Activated naive CD4-positive, alpha-beta T cell treated with anti-CD3 and anti-CD28 coated beads, Interleukin-2, amount 10 ng/mL, durations not matched to agents 7 days and 5 days (primary cell): ENCODE measurements at regions of chr19 and their contacts with region 1.

Region 1: GRCh38 chr19:19145684-19146608 is 7.7 kb upstream of the TMEM161A start:
- DNase-seq: peak; percentile 90
- H3K4me3 Mint-ChIP-seq: no peak overlapping the region
- H3K27ac Mint-ChIP-seq: no peak overlapping the region
- H3K4me1 Mint-ChIP-seq: no peaks in the 10 kb centered on the region
- H3K27me3 Mint-ChIP-seq: peaks cover 3% of the 10 kb centered on the region

Region 2: GRCh38 chr19:19103167-19103566 is 42.8 kb before region 1 on chr19:
- CTCF ChIA-PET with region 1: no interaction called
- DNase-seq: no peak
- H3K4me3 Mint-ChIP-seq: no peak overlapping the region
- H3K27ac Mint-ChIP-seq: no peak overlapping the region
- H3K4me1 Mint-ChIP-seq: no peaks in the 10 kb centered on the region
- H3K27me3 Mint-ChIP-seq: no peaks in the 10 kb centered on the region

Region 3: GRCh38 chr19:19176950-19177349 is 31.0 kb after region 1 on chr19:
- CTCF ChIA-PET with region 1: interaction called, 44 read pairs
- DNase-seq: no peak
- H3K4me3 Mint-ChIP-seq: no peak overlapping the region
- H3K27ac Mint-ChIP-seq: no peak overlapping the region
- H3K4me1 Mint-ChIP-seq: no peaks in the 10 kb centered on the region
- H3K27me3 Mint-ChIP-seq: no peaks in the 10 kb centered on the region

Region 4: DNA sequence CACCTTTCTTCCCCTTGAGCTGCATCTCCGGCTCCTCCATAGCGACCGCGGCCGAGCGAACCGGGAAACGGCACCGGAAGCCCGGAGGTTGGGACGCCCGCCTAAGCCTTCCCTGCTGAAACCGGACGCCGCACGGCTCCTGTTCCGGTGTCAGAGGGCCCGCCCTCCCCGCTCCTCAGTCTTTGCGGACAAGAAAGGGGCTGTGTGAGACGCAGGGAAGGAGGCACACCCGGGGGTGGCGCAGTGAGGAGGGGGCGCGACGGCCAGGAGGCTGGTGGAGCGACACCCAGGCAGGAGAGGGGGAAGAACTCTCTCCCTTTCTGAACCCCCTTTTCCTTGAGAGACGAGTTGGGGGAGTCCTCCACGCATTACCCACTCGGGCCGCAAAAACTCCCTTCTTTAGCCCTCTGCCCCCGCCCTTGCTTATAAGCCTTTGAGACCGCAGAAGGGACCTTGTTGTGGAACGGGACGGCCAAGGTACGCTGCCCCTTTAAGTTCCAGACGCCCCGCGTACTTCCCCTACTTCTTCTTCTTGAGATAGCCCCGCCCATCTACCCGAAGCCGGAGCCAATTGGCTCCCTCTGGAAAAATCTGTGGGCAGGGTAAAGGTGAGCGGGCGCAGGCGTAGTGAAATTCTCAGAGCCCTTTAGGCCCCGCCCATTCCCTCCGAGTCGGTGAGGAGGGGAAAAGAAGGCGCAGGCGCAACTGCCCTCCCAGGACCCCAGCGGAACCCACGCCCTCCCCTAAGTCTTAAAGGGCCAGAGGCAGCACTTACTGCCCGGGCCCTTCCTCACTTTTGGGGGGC is 46.3 kb after region 1 on chr19 and contains the starts of genes BORCS8 and RFXANK:
- CTCF ChIA-PET with region 1: no interaction called
- DNase-seq: peak; percentile 100
- H3K4me3 Mint-ChIP-seq: peak within 1 kb of the TSS; percentile 99
- H3K27ac Mint-ChIP-seq: peak within 1 kb of the TSS; percentile 98
- H3K4me1 Mint-ChIP-seq: peaks cover 54% of the 10 kb centered on the region
- H3K27me3 Mint-ChIP-seq: no peaks in the 10 kb centered on the region

Region 5: DNA sequence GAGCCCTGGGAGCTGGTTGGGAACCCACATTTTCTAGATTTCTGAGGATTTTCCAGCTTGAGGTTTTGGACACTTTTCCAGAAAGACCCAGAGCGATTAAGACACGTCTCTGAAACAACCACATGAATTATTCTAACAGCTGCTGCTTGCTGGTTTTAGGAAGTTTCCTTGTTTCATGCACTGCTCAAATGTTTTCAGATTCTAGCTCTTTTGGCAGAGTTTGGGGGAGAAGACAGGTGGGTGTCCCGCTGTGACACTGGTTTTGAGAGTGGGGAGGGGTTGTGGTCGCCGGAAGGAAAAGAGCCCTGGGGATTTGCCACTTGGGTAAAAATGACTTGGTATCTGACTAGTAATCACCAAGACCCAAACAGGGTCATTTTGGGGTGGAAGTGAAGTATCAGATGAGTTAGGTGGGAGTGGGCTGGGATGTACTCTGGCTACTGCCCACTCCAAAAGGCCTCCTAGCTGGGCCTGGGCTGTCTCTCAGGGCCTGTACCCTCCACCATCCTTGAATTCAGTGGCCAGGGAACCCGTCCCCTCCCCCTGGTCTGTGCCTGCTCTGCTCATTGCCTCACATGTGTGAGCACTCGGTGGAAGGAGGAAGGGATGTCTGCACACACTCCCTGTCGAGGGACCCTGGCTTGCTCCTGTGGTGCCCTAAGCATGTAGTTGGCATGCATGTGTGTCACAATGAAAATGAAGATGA is 272.8 kb after region 1 on chr19:
- CTCF ChIA-PET with region 1: no interaction called
- DNase-seq: no peak
- H3K4me3 Mint-ChIP-seq: no peak overlapping the region
- H3K27ac Mint-ChIP-seq: peak overlapping the region; percentile 2
- H3K4me1 Mint-ChIP-seq: peaks cover 47% of the 10 kb centered on the region
- H3K27me3 Mint-ChIP-seq: no peaks in the 10 kb centered on the region